Dorsolateral prefrontal cortex (tissue), 120 donors: ENCODE measurements at regions of chr2 and their contacts with region 1.

Region 1: DNA sequence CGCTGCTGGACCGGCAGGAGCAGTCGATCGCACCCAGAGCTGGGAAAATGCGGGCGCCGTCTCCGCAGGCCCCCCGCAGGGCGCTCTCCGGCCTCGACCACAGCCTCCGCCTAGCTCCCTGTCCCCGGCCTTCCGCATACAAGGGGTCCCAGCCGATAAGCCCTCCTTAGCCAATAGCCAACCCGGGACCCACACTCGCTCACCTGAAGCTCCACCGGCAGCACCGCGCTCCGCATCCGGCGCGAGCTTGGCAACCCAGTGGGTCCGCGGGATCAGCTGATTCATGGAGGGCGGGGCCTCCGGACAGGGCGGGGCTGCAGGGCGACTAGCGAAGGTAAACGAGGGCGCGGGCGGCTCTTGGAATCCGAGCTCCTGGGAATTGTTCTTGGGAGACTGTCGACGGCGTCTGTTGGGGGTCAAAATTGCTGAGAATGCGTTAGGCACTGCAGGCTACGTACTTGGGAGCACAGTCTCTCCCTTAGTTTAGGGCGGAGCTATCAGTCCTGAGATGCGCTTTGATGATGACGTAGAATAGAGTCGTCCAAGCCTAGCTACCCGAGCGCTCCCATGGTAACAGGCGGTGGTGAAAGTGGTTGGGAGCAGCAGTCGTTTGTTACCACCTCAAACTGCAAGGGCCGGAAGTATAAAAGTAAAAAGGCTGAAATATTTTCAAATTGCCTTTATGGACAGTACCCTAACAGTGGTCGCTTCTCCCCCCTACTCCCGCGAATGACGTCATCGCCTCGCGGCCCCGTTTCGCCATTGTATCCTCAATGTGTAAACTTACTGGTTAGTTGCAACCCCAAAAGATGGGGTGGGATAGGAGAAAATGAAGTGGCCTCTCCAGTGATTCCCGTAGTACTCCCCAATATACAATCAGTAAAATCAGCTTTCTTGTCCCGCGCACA is at the start of gene ALS2:
- DNase-seq: peak; percentile 88 to 98 (median 95)
- H3K4me3 ChIP-seq: peak within 1 kb of the TSS; percentile 62 to 100 (median 95)
- H3K27ac ChIP-seq: peak within 1 kb of the TSS; percentile 37 to 96 (median 84)
- H3K27me3 ChIP-seq: no peaks in the 10 kb centered on the region
- CTCF ChIP-seq: peak in 18 of 56 donors; percentile 5 to 47 (median 20)
- total RNA-seq, gene ALS2: 34.9 to 82.1 (median 57.1) TPM

Region 2: DNA sequence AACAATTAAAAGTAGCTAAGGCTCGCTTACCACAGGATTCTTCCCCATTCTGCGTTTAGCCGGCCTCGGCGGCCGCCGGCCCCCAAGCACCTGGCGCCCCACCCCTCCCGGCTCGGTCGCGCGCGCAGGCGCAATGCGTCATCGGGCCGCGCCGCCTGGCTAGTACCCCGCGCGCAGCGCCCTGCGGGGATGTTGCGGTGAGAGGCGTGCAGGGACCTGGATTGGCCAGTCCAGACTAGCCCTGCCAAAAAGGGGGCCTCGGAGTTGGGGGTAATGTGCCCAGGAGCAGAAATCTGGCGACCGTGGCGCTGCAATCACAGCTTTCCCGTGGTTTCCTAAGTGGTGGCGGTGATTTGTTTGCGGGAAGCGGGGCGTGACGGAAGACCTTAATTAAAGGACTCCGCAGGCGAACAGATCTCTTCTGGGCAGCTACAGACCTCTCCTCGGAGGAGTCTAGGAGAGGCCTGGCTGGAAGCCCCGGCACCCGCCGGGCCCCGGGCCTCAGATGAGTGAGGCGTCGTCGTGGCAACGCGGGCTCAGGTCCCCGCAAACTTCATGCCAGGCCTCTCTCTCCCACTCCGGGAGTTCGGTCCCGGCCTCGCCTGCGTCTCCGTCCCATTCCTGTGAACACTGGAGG is 138.2 kb before region 1 on chr2:
- intact Hi-C with region 1: loop called in 1 of 2 experiments (anchors 5 kb)
- DNase-seq: peak; percentile 68 to 91 (median 76)
- H3K4me3 ChIP-seq: peak overlapping the region; percentile 63 to 97 (median 88)
- H3K27ac ChIP-seq: peak overlapping the region; percentile 48 to 98 (median 93)
- H3K27me3 ChIP-seq: no peaks in the 10 kb centered on the region
- CTCF ChIP-seq: peak in 34 of 56 donors; percentile 4 to 65 (median 36)

Region 3: GRCh38 chr2:202072226-202072625 is 291.3 kb after region 1 on chr2:
- intact Hi-C with region 1: no loop called
- DNase-seq: no peak
- H3K4me3 ChIP-seq: no peak overlapping the region
- H3K27ac ChIP-seq: no peak overlapping the region
- H3K27me3 ChIP-seq: no peaks in the 10 kb centered on the region
- CTCF ChIP-seq: peak in 1 of 56 donors; percentile 26